PC-9 (cell line): ENCODE measurements at regions of chr5 and their contacts with region 1.

Region 1: GRCh38 chr5:98773464-98774191 is at the start of gene RGMB:
- DNase-seq: peak; percentile 96
- H3K4me3 ChIP-seq: peak within 1 kb of the TSS; percentile 66
- H3K27ac ChIP-seq: peak within 1 kb of the TSS; percentile 82
- H3K4me1 ChIP-seq: peaks cover 30% of the 10 kb centered on the region
- H3K27me3 ChIP-seq: no peaks in the 10 kb centered on the region
- CTCF ChIP-seq: no peak
- total RNA-seq, gene RGMB: 14.2 and 14.6 TPM in 2 replicates

Region 2: GRCh38 chr5:97183100-97183929 is 1590.3 kb before region 1 on chr5 and contains the start of gene RIOK2:
- CTCF ChIA-PET with region 1: no interaction called
- POLR2A ChIA-PET with region 1: no interaction called
- intact Hi-C with region 1: loop called (anchors 1 kb)
- DNase-seq: peak; percentile 87 to 89
- H3K4me3 ChIP-seq: peak within 1 kb of the TSS; percentile 93
- H3K27ac ChIP-seq: peak within 1 kb of the TSS; percentile 91
- H3K4me1 ChIP-seq: peaks cover 17% of the 10 kb centered on the region
- H3K27me3 ChIP-seq: no peaks in the 10 kb centered on the region
- CTCF ChIP-seq: no peak
- total RNA-seq, gene RIOK2: 14.4 and 18.4 TPM in 2 replicates

Region 3: GRCh38 chr5:97534166-97534565 is 1239.5 kb before region 1 on chr5:
- CTCF ChIA-PET with region 1: no interaction called
- POLR2A ChIA-PET with region 1: no interaction called
- intact Hi-C with region 1: loop called (anchors 5 kb)
- DNase-seq: peak; percentile 11 to 75
- H3K4me3 ChIP-seq: no peak overlapping the region
- H3K27ac ChIP-seq: no peak overlapping the region
- H3K4me1 ChIP-seq: no peaks in the 10 kb centered on the region
- H3K27me3 ChIP-seq: no peaks in the 10 kb centered on the region
- CTCF ChIP-seq: peak; percentile 70

Region 4: GRCh38 chr5:98309785-98310598 is 463.6 kb before region 1 on chr5:
- CTCF ChIA-PET with region 1: no interaction called
- POLR2A ChIA-PET with region 1: no interaction called
- intact Hi-C with region 1: loop called (anchors 5 kb)
- DNase-seq: peak; percentile 57 to 67
- H3K4me3 ChIP-seq: peak overlapping the region; percentile 40; the same call in 1 of the 2 replicates
- H3K27ac ChIP-seq: peak overlapping the region; percentile 84
- H3K4me1 ChIP-seq: peaks cover 40% of the 10 kb centered on the region
- H3K27me3 ChIP-seq: no peaks in the 10 kb centered on the region
- CTCF ChIP-seq: no peak

Region 5: GRCh38 chr5:98796197-98796972 is 22.8 kb after region 1 on chr5:
- CTCF ChIA-PET with region 1: interaction called, 8 read pairs
- POLR2A ChIA-PET with region 1: no interaction called
- intact Hi-C with region 1: loop called (anchors 2 kb)
- DNase-seq: peak; percentile 49 to 62
- H3K4me3 ChIP-seq: no peak overlapping the region
- H3K27ac ChIP-seq: no peak overlapping the region
- H3K4me1 ChIP-seq: 0 out of 2 replicates have a peak, but pooled peaks cover 3% of the 10 kb centered on the region
- H3K27me3 ChIP-seq: no peaks in the 10 kb centered on the region
- CTCF ChIP-seq: peak; percentile 86

Region 6: GRCh38 chr5:98940581-98940980 is 167.0 kb after region 1 on chr5:
- CTCF ChIA-PET with region 1: no interaction called
- POLR2A ChIA-PET with region 1: no interaction called
- intact Hi-C with region 1: no loop called
- DNase-seq: no peak
- H3K4me3 ChIP-seq: no peak overlapping the region
- H3K27ac ChIP-seq: no peak overlapping the region
- H3K4me1 ChIP-seq: no peaks in the 10 kb centered on the region
- H3K27me3 ChIP-seq: no peaks in the 10 kb centered on the region
- CTCF ChIP-seq: no peak

Region 7: GRCh38 chr5:99004960-99005359 is 231.3 kb after region 1 on chr5:
- CTCF ChIA-PET with region 1: no interaction called
- POLR2A ChIA-PET with region 1: no interaction called
- intact Hi-C with region 1: no loop called
- DNase-seq: no peak
- H3K4me3 ChIP-seq: no peak overlapping the region
- H3K27ac ChIP-seq: no peak overlapping the region
- H3K4me1 ChIP-seq: peaks cover 4% of the 10 kb centered on the region; the same call in 1 of the 2 replicates
- H3K27me3 ChIP-seq: no peaks in the 10 kb centered on the region
- CTCF ChIP-seq: no peak

Region 8: DNA sequence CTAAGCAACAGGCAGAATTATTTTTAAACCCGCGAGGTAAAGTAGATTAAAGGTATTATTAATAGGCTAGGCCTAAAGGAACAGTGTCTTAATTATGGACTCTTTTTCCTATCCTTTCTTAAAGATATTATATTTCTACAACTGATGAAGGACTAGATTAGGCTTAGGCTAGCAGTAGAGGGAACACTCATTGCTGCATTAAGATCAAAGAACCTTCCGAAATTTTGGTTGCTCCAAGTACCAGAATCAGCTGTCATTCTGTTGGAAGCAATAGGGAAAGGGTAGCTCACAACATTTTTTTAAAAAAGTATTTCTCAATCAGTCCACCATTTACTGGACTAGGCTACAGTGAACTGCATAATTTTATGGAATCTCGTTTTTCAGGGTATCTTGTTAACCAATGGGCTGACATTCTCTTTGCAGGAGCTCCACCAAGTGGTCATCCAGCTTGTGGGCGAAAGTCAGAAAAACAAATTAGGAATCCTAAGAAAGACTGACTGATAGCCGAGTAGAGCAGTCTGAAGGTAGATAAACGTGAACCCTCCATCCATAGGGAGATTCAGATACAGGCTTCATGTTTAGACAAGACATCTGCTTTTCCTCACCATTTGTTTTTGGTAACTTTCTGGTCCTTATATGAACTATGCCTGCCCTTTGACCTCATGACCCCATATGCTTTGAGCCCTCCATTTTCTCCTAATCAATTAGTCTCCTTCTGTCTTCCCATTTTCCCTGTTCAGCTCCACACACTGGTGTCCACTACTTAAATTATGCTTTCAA is 258.8 kb after region 1 on chr5:
- CTCF ChIA-PET with region 1: interaction called, 3 read pairs
- POLR2A ChIA-PET with region 1: no interaction called
- intact Hi-C with region 1: loop called (anchors 10 kb)
- DNase-seq: peak; percentile 42 to 68
- H3K4me3 ChIP-seq: no peak overlapping the region
- H3K27ac ChIP-seq: no peak overlapping the region
- H3K4me1 ChIP-seq: peaks cover 33% of the 10 kb centered on the region
- H3K27me3 ChIP-seq: no peaks in the 10 kb centered on the region
- CTCF ChIP-seq: peak; percentile 77